Transverse colon (tissue), 4 donors: ENCODE measurements at regions of chr15 and their contacts with region 1.

Region 1: GRCh38 chr15:59420986-59421618 is 16.9 kb upstream of the FAM81A start:
- DNase-seq: no peak
- H3K4me3 ChIP-seq: no peak overlapping the region
- H3K27ac ChIP-seq: no peak overlapping the region
- H3K4me1 ChIP-seq: no peaks in the 10 kb centered on the region
- H3K27me3 ChIP-seq: no peaks in the 10 kb centered on the region
- CTCF ChIP-seq: no peak
- EP300 ChIP-seq: no peak
- POLR2A ChIP-seq: no peak

Region 2: GRCh38 chr15:59392299-59392698 is 28.8 kb before region 1 on chr15:
- in situ Hi-C with region 1: no loop called
- intact Hi-C with region 1: loop called (anchors 2 kb)
- DNase-seq: no peak
- H3K4me3 ChIP-seq: no peak overlapping the region
- H3K27ac ChIP-seq: no peak overlapping the region
- H3K4me1 ChIP-seq: no peaks in the 10 kb centered on the region
- H3K27me3 ChIP-seq: no peaks in the 10 kb centered on the region
- CTCF ChIP-seq: no peak
- EP300 ChIP-seq: no peak
- POLR2A ChIP-seq: no peak